Activated T-helper 1 cell treated with anti-CD3 and anti-CD28 coated beads, Interleukin-12 subunit alpha, Interleukin-12 subunit beta, Interleukin-2, Interleukin-4 antibody, amounts not matched to agents 30 ng/mL and 10 ng/mL and 1 ng/mL, durations not matched to agents 14 hours and 24 hours and 36 hours (primary cell): ENCODE measurements at regions of chr14 and their contacts with region 1.

Region 1: DNA sequence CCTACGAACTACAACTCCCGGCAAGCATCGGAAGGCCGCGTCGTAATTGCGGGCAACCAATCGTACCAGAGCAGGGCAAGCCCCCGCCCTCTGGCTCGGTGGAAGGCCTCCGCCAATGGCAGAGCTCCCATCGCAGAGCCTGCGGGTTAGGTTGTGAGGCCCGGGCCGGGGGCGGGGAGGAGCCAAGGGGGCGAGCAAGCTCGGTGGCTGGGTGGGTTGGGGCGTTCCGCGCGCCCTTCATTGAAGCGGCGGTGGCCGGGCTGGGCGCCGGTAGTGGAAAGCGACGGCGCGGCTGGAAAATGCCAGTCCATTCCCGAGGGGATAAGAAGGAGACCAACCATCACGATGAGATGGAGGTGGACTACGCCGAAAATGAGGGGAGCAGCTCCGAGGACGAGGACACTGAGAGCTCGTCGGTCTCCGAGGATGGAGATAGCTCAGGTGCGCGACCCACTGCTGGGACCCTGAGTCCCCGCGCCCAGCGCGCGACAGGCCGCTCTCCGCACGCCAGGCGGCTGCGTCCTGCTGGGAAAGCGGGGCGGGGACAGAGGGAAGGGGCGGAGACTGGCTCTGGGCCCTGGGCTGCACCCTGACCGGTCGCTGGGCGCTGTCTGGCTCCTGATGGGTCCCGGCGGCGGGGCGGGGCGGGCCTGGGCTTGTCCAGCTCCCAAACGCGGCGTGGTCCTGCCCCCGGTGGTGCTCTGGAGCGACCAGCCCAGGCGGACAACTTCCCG is at the start of gene BRMS1L:
- DNase-seq: peak; percentile 96
- H3K4me3 Mint-ChIP-seq: peak within 1 kb of the TSS; percentile 88
- H3K27ac Mint-ChIP-seq: peak within 1 kb of the TSS; percentile 90
- H3K4me1 Mint-ChIP-seq: peaks cover 16% of the 10 kb centered on the region
- H3K27me3 Mint-ChIP-seq: peaks cover 4% of the 10 kb centered on the region
- total RNA-seq, gene BRMS1L: 6.3 and 9.1 TPM in 2 replicates

Region 2: GRCh38 chr14:34461334-34462131 is 1364.9 kb before region 1 on chr14:
- intact Hi-C with region 1: loop called (anchors 5 kb)
- DNase-seq: no peak
- H3K4me3 Mint-ChIP-seq: peak overlapping the region; percentile 90
- H3K27ac Mint-ChIP-seq: peak overlapping the region; percentile 91
- H3K4me1 Mint-ChIP-seq: peaks cover 28% of the 10 kb centered on the region
- H3K27me3 Mint-ChIP-seq: no peaks in the 10 kb centered on the region

Region 3: GRCh38 chr14:35292051-35292769 is 534.2 kb before region 1 on chr14 and contains the start of gene PSMA6:
- intact Hi-C with region 1: loop called (anchors 5 kb)
- DNase-seq: peak; percentile 99
- H3K4me3 Mint-ChIP-seq: peak within 1 kb of the TSS; percentile 99
- H3K27ac Mint-ChIP-seq: peak within 1 kb of the TSS; percentile 94
- H3K4me1 Mint-ChIP-seq: peaks cover 56% of the 10 kb centered on the region
- H3K27me3 Mint-ChIP-seq: no peaks in the 10 kb centered on the region
- total RNA-seq, gene PSMA6: 475 and 479 TPM in 2 replicates

Region 4: DNA sequence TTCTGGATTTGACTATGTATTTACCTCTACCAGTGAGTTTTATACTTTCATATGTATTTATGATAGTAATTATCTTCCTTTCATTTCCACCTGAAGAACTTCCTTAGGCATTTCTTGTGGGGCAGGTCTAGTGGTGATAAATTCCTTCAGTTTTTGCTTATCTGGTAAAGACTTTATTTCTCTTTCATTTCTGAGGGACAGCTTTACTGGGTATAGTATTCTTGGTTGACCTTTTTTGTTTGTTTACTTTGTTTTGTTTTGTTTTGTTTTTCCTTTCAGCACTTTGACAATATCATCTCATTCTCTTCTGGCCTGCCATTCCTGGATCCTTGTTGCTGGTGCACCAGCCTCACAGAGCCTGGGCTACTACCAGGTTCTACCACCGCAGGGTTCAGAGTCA is 367.9 kb before region 1 on chr14:
- intact Hi-C with region 1: no loop called
- DNase-seq: no peak
- H3K4me3 Mint-ChIP-seq: no peak overlapping the region
- H3K27ac Mint-ChIP-seq: no peak overlapping the region
- H3K4me1 Mint-ChIP-seq: no peaks in the 10 kb centered on the region
- H3K27me3 Mint-ChIP-seq: no peaks in the 10 kb centered on the region

Region 5: GRCh38 chr14:35741345-35742031 is 84.9 kb before region 1 on chr14:
- intact Hi-C with region 1: loop called (anchors 5 kb)
- DNase-seq: no peak
- H3K4me3 Mint-ChIP-seq: no peak overlapping the region
- H3K27ac Mint-ChIP-seq: peak overlapping the region; percentile 47
- H3K4me1 Mint-ChIP-seq: peaks cover 23% of the 10 kb centered on the region
- H3K27me3 Mint-ChIP-seq: no peaks in the 10 kb centered on the region

Region 6: GRCh38 chr14:35932659-35933322 is 106.4 kb after region 1 on chr14:
- intact Hi-C with region 1: loop called (anchors 2 kb)
- DNase-seq: peak; percentile 31
- H3K4me3 Mint-ChIP-seq: peak overlapping the region; percentile 72
- H3K27ac Mint-ChIP-seq: peak overlapping the region; percentile 7
- H3K4me1 Mint-ChIP-seq: peaks cover 35% of the 10 kb centered on the region
- H3K27me3 Mint-ChIP-seq: peaks cover 2% of the 10 kb centered on the region